ENCODE measurements at regions of chr3 and their contacts with region 1.

Region 1: GRCh38 chr3:71978150-71978721 is 193.3 kb upstream of the PROK2 start:
- DNase-seq: peak; percentile 67
- ATAC-seq: peak; percentile 87
- H3K4me3 Mint-ChIP-seq: peak overlapping the region; percentile 44
- H3K27ac Mint-ChIP-seq: peak overlapping the region; percentile 81
- H3K4me1 Mint-ChIP-seq: peaks cover 47% of the 10 kb centered on the region
- H3K27me3 Mint-ChIP-seq: peaks cover 13% of the 10 kb centered on the region

Region 2: DNA sequence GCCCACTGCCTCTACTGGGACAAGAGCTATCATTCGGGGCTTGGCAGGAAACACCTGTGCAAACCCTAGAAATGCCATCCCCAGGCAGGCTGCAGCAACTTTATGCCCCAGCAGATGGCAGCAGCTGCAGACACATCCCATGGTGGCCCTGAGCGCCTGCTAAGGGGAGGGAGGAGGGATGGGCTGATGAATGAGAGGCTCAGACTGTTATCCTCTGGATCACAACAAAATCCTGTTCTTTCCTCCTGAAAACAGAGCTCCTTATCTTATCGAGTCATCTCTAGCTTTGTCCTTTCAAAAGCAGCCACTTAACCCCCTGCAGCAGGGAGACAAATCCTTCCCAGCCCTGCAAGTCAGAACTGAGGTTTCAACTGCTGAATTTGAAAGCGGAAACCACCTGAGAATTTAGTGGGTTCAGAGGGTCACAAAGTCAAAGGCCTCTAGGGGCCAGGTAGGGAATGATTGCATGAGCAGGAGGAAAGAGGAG is 102.7 kb before region 1 on chr3:
- CTCF ChIA-PET with region 1: interaction called, 6 read pairs
- POLR2A ChIA-PET with region 1: no interaction called
- intact Hi-C with region 1: loop called in 1 of 2 experiments (anchors 1 kb)
- DNase-seq: peak; percentile 90
- ATAC-seq: peak; percentile 90
- H3K4me3 Mint-ChIP-seq: no peak overlapping the region
- H3K27ac Mint-ChIP-seq: peak overlapping the region; percentile 89
- H3K4me1 Mint-ChIP-seq: peaks cover 35% of the 10 kb centered on the region
- H3K27me3 Mint-ChIP-seq: peaks cover 6% of the 10 kb centered on the region

Region 3: GRCh38 chr3:71955240-71956068 is 22.8 kb before region 1 on chr3:
- CTCF ChIA-PET with region 1: interaction called, 8 read pairs
- POLR2A ChIA-PET with region 1: interaction called, 3 read pairs
- intact Hi-C with region 1: loop called in 1 of 2 experiments (anchors 1 kb)
- DNase-seq: peak; percentile 72
- ATAC-seq: peak; percentile 80
- H3K4me3 Mint-ChIP-seq: no peak overlapping the region
- H3K27ac Mint-ChIP-seq: peak overlapping the region; percentile 55
- H3K4me1 Mint-ChIP-seq: peaks cover 35% of the 10 kb centered on the region
- H3K27me3 Mint-ChIP-seq: peaks cover 2% of the 10 kb centered on the region

Region 4: GRCh38 chr3:71998995-71999673 is 20.9 kb after region 1 on chr3:
- CTCF ChIA-PET with region 1: interaction called, 5 read pairs
- POLR2A ChIA-PET with region 1: interaction called, 5 read pairs
- intact Hi-C with region 1: loop called (anchors 1 kb)
- DNase-seq: peak; percentile 47
- ATAC-seq: peak; percentile 90
- H3K4me3 Mint-ChIP-seq: no peak overlapping the region
- H3K27ac Mint-ChIP-seq: peak overlapping the region; percentile 77
- H3K4me1 Mint-ChIP-seq: peaks cover 34% of the 10 kb centered on the region
- H3K27me3 Mint-ChIP-seq: peaks cover 5% of the 10 kb centered on the region

Region 5: DNA sequence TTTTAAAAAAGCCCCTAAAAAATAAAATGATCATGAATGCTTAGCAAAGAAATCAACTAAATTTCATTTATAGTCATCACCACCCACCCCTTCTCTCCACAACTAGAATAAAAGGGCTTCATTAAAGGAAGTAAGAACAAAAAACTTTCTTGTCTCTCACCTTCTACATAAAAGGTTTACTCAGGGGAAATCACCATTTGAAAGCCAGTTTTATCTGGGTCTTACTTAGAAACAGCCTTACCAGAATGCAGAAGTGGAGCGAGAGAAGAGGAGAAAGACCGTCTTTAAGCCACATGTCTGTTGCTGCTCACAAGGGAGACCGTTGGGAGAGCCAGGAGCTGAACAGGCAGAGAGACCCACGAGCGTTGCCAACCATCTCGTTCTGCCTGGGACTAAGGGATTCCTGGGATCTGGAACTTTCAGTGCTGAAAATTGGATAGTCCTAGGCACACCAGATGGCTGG is 156.8 kb after region 1 on chr3:
- CTCF ChIA-PET with region 1: interaction called, 3 read pairs
- POLR2A ChIA-PET with region 1: no interaction called
- intact Hi-C with region 1: loop called in 1 of 2 experiments (anchors 5 kb)
- DNase-seq: peak; percentile 16
- ATAC-seq: peak; percentile 62
- H3K4me3 Mint-ChIP-seq: peak overlapping the region; percentile 54
- H3K27ac Mint-ChIP-seq: peak overlapping the region; percentile 85
- H3K4me1 Mint-ChIP-seq: peaks cover 48% of the 10 kb centered on the region
- H3K27me3 Mint-ChIP-seq: peaks cover 2% of the 10 kb centered on the region

Region 6: GRCh38 chr3:72629191-72629631 is 651.0 kb after region 1 on chr3:
- CTCF ChIA-PET with region 1: no interaction called
- POLR2A ChIA-PET with region 1: no interaction called
- intact Hi-C with region 1: loop called in 1 of 2 experiments (anchors 1 kb)
- DNase-seq: no peak
- ATAC-seq: peak; percentile 67
- H3K4me3 Mint-ChIP-seq: no peak overlapping the region
- H3K27ac Mint-ChIP-seq: peak overlapping the region; percentile 79
- H3K4me1 Mint-ChIP-seq: peaks cover 60% of the 10 kb centered on the region
- H3K27me3 Mint-ChIP-seq: no peaks in the 10 kb centered on the region

Region 7: DNA sequence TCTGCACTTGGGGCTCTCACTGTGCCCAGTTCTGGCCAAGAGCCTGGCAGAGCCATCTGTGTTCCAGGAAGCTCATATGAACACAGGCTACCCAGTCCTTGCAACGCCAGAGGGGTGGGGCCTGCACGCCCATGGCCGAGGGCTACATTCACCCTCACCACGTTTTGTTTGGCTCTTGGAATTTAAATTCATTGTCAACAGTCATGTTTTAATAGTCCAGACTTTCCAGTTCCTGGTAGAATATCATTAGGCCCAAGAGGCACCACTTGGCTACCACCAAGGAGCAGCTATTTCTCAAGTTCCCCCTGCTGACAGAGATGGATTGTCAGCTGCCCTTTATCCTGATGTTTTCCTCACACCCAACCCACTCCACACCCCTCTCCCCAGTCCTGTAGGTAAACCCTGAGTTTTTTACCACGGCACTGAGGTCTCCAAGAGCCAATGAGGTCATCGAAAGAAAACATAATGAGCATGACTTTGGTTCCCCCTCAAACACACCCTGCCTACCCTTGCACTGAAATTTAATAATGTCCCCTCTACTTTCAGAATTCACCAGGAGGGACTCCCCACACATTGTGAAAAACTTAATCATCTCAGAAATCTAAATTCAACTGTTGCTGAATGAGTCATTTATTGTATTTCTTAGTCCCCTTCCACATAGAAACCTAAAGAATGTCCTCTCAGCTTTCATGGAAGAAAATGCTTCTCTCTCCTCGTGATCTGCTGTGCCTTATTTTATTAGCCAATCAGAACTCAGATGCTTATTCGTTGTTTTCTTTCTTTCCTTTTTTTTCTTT is 744.9 kb after region 1 on chr3:
- CTCF ChIA-PET with region 1: no interaction called
- POLR2A ChIA-PET with region 1: no interaction called
- intact Hi-C with region 1: loop called in 1 of 2 experiments (anchors 1 kb)
- DNase-seq: peak; percentile 16
- ATAC-seq: peak; percentile 95
- H3K4me3 Mint-ChIP-seq: no peak overlapping the region
- H3K27ac Mint-ChIP-seq: peak overlapping the region; percentile 61
- H3K4me1 Mint-ChIP-seq: peaks cover 19% of the 10 kb centered on the region
- H3K27me3 Mint-ChIP-seq: peaks cover 5% of the 10 kb centered on the region

Measured in activated CD4-positive, alpha-beta T cell treated with anti-CD3 and anti-CD28 coated beads for 36 hours (primary cell).